PC-3 (cell line): ENCODE measurements at regions of chr10 and their contacts with region 1.

Region 1: GRCh38 chr10:34280599-34281374 is 534.3 kb downstream of the PARD3 start:
- DNase-seq: peak; percentile 100
- ATAC-seq: peak; percentile 99
- H3K4me3 ChIP-seq: peak overlapping the region; percentile 35; the same call in 1 of the 2 replicates
- H3K27ac ChIP-seq: peak overlapping the region; percentile 54
- H3K4me1 ChIP-seq: peaks cover 22% of the 10 kb centered on the region
- H3K27me3 ChIP-seq: no peaks in the 10 kb centered on the region
- CTCF ChIP-seq: peak; percentile 40; the same call in 1 of the 2 replicates

Region 2: DNA sequence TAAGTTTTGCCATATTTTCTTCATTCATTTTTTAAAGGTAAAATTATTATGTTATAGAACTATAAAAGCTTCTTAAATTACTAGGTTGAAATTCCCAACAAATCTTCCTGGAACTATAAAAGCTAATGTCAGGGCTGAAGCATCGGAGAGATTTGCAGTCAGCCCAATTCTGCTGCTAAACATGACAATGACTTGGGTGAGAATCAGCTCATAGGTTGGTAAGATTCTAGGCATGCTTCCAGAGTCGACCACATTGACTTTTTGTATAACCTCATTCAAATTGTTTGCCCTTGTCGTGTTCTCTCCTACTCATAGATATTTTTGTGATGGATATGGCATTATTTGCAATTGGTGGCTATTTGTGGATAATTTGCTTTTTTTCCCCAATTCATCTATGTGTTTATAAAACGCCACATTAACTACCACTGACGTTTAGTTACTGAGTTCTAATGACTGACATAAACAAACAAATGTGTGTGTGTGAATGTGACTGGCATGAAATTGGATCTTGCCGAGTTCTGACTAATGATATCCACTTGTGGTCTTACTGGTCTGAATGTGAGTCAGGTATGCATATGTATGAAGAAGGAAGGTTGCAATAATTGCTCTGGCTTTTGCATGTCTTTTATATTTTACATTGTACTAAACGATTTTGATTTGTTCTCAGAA is 45.5 kb before region 1 on chr10:
- CTCF ChIA-PET with region 1: interaction called, 3 read pairs
- POLR2A ChIA-PET with region 1: no interaction called
- intact Hi-C with region 1: loop called (anchors 2 kb)
- DNase-seq: peak; percentile 100
- ATAC-seq: peak; percentile 100
- H3K4me3 ChIP-seq: peak overlapping the region; percentile 42
- H3K27ac ChIP-seq: peak overlapping the region; percentile 47
- H3K4me1 ChIP-seq: peaks cover 18% of the 10 kb centered on the region
- H3K27me3 ChIP-seq: no peaks in the 10 kb centered on the region
- CTCF ChIP-seq: no peak

Region 3: DNA sequence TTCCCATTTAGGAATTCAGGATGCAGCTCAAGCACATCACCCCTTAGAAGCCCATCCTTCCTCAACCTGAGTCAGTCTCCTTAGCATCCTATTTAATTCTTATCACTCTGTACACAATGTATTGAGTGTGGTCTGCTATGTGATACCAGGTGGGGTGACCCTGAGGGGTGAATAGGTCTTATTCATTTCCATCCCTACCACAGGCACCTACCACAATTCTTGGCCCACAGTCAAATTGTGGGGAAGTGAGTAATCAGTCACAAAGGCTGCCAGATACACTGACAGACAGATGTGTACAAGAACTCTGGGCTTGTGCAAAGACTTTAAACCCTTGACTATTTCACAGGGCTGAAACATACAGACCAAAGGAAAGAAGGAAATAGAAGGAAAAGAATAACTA is 26.2 kb before region 1 on chr10:
- CTCF ChIA-PET with region 1: no interaction called
- POLR2A ChIA-PET with region 1: no interaction called
- intact Hi-C with region 1: loop called (anchors 1 kb)
- DNase-seq: peak; percentile 100
- ATAC-seq: peak; percentile 89
- H3K4me3 ChIP-seq: no peak overlapping the region
- H3K27ac ChIP-seq: peak overlapping the region; percentile 3
- H3K4me1 ChIP-seq: peaks cover 28% of the 10 kb centered on the region
- H3K27me3 ChIP-seq: no peaks in the 10 kb centered on the region
- CTCF ChIP-seq: no peak

Region 4: DNA sequence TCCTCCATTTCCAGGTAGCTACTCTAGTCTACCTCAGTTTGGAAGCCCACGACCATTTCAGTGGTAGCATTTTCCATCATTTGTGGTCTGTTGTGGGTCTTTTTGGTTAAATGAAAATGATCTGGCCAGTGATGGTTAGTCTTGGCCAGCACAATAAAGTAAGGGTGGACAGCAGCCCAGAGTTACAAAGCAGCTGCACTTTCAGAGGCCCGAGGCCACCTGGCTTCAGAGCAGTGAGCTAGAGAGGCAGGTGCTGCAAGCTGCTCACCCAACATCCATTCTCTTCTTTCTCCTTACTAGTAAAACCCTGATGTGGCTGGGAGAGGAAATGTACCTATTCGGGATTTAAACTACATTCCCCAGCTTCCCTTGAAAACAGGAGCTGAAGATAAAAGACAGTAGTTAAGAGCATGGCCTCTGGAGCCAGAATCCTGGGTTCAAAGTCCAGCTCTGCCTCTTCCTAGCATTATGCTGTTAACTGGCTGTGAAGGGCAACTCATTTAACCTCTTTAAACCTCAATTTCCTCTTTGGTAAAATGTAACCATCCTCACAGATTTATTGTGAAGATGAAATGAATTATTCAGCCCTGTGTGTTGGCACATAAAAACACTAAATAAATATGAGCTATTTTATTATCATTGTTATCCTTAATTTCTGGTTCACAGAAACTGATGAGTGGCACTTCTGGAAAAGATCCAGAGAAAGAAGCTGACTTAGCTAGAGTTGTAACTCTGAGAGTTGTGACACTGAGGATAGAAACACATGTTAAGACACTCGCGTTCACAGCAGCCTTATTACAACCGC is 17.0 kb after region 1 on chr10:
- CTCF ChIA-PET with region 1: no interaction called
- POLR2A ChIA-PET with region 1: no interaction called
- intact Hi-C with region 1: loop called (anchors 1 kb)
- DNase-seq: peak; percentile 71
- ATAC-seq: peak; percentile 65
- H3K4me3 ChIP-seq: no peak overlapping the region
- H3K27ac ChIP-seq: no peak overlapping the region
- H3K4me1 ChIP-seq: peaks cover 31% of the 10 kb centered on the region
- H3K27me3 ChIP-seq: no peaks in the 10 kb centered on the region
- CTCF ChIP-seq: no peak

Region 5: DNA sequence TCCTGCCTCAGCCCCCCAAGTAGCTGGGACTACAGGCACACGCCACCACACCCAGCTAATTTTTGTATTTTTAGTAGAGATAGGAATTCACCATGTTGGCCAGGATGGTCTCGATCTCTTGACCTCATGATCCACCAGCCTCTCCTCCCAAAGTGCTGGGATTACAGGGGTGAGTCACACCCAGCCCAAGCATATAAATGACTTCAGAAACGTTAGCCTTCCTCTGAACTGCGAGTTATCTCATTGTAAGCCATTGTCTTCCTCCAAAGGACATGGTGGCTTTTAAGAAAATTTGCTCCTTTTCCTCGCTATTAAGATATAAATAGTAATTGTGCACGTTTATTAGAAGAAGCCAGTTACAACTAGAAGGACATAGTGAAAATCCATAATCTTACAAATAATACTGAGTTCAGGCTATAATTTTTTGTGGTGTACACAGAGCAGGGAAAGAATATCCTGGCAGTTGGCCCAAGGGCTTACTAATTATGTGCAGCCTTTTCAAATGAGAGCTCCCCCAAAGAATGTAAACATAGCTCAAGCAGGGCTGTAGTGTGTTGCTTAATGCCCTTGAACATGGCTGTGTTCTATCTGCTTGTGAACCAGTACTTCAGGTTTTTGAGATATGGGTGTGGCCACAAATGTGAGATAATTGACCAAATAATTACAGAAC is 38.5 kb after region 1 on chr10:
- CTCF ChIA-PET with region 1: no interaction called
- POLR2A ChIA-PET with region 1: no interaction called
- intact Hi-C with region 1: loop called (anchors 1 kb)
- DNase-seq: peak; percentile 100
- ATAC-seq: peak; percentile 95
- H3K4me3 ChIP-seq: no peak overlapping the region
- H3K27ac ChIP-seq: peak overlapping the region; percentile 41
- H3K4me1 ChIP-seq: peaks cover 34% of the 10 kb centered on the region
- H3K27me3 ChIP-seq: no peaks in the 10 kb centered on the region
- CTCF ChIP-seq: no peak